Activated B cell treated with CpG ODN at 0.5 μM for 24 hours (primary cell): ENCODE measurements at regions of chr2 and their contacts with region 1.

Region 1: DNA sequence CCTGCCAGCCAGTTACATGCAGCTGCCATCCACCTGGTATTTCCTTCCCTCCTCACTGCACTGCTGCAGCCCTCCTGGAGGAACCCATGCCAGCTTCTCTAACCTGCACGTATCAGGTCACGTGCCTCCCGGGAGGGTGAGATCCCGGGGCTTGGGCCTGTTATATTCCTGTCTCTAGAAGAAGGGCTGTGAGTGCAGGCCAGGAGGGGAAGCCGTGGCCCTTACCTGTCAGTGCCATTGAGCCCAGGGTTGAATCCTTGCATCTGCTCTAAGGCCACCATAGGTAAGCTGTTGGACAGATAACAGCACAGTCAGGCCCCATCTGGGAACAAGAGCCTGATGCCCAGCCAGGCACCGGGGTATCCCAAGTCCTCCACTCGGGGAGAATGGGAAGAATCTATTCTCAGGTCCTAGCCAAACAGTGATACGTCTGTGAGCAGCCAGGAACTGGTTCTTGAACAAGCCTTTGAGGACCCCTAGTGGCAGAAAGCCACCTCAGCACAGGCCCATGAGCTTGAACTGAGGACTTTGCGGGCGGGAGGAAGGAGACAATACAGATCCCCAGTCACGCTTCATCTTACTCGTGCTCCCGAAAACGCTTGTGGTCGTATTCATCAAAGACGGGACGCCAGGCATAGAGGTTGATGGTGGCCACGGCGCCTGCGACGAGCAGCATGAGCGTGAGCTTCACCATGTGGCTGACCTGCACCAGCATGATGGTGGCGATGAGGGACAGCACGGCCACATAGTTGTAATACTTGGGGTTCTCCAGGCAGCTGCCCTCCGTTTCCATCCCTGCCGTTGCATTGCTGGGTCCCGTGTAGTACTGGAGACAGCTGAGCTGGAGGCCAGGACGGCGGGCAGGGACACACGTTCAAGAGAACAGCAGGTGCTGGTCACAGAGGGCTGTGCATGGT is 34.4 kb downstream of the CENPO start:
- DNase-seq: peak; percentile 41
- ATAC-seq: peak; percentile 86
- H3K4me3 Mint-ChIP-seq: no peak overlapping the region
- H3K27ac Mint-ChIP-seq: no peak overlapping the region
- H3K4me1 Mint-ChIP-seq: peaks cover 3% of the 10 kb centered on the region
- H3K27me3 Mint-ChIP-seq: no peaks in the 10 kb centered on the region
- CTCF ChIP-seq: peak; percentile 38

Region 2: GRCh38 chr2:24409700-24410556 is 417.7 kb before region 1 on chr2:
- CTCF ChIA-PET with region 1: interaction called, 132 read pairs
- POLR2A ChIA-PET with region 1: interaction called, 7 read pairs
- intact Hi-C with region 1: loop called (anchors 1 kb)
- DNase-seq: no peak
- ATAC-seq: peak; percentile 79
- H3K4me3 Mint-ChIP-seq: no peak overlapping the region
- H3K27ac Mint-ChIP-seq: no peak overlapping the region
- H3K4me1 Mint-ChIP-seq: no peaks in the 10 kb centered on the region
- H3K27me3 Mint-ChIP-seq: peaks cover 11% of the 10 kb centered on the region
- CTCF ChIP-seq: peak; percentile 86

Region 3: DNA sequence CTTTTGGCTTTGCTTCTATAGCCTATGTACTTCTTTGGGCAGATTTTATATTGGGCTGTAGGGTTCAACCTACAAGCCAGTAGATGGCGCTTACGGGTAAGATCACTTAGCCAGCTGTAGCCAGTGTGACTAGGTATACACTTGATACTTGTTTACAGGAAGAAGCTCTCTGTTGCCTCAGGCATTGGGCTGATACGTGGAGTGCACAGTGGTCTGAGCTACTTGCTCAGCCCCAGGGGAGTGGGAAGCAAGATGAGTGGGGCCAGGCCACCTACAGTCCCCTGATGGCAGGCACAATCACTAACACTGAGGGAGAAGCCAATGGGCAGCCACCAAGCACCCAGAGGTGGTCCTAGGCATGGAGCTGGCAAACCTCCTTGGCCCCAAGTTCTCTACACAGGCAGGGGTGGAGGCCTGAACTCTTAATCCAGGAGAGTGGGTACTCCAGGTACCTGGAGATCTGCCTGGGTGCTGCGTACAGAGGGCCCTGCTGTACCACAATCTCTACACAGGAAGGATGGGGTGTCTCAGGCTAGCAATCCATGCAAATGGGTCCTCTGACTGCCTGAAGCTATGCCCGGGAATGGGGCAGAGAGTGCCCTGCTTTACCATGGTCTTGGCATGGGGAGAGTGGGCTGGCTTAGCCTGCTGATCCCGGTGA is 214.3 kb before region 1 on chr2:
- CTCF ChIA-PET with region 1: interaction called, 3 read pairs
- POLR2A ChIA-PET with region 1: no interaction called
- intact Hi-C with region 1: loop called (anchors 1 kb)
- DNase-seq: no peak
- ATAC-seq: peak; percentile 62
- H3K4me3 Mint-ChIP-seq: no peak overlapping the region
- H3K27ac Mint-ChIP-seq: no peak overlapping the region
- H3K4me1 Mint-ChIP-seq: peaks cover 16% of the 10 kb centered on the region
- H3K27me3 Mint-ChIP-seq: no peaks in the 10 kb centered on the region
- CTCF ChIP-seq: no peak

Region 4: GRCh38 chr2:24898122-24899021 is 70.8 kb after region 1 on chr2:
- CTCF ChIA-PET with region 1: no interaction called
- POLR2A ChIA-PET with region 1: no interaction called
- intact Hi-C with region 1: no loop called
- DNase-seq: no peak
- ATAC-seq: no peak
- H3K4me3 Mint-ChIP-seq: no peak overlapping the region
- H3K27ac Mint-ChIP-seq: no peak overlapping the region
- H3K4me1 Mint-ChIP-seq: no peaks in the 10 kb centered on the region
- H3K27me3 Mint-ChIP-seq: no peaks in the 10 kb centered on the region
- CTCF ChIP-seq: no peak

Region 5: DNA sequence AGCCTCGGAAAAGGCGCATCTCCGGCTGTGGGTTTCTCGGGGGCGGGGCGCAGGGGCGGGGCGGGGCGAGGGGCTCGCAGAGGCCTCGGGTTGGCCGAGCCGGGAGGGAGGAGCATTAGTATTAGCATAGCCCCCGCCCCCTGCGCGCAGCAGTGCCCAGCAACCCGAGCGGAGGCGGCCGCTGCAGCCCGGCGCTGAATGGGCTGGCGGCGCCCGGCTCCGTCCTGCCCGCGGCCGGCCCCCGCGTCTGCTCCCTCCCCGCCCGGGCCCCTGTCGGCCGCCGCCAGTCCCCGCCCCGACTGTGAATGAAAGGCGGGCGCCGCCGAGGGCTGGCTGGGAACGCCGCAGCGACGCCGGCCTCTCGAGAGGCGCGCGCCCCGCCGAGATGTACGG is 214.3 kb after region 1 on chr2 and contains the start of gene EFR3B:
- CTCF ChIA-PET with region 1: no interaction called
- POLR2A ChIA-PET with region 1: interaction called, 14 read pairs
- intact Hi-C with region 1: no loop called
- DNase-seq: peak; percentile 84
- ATAC-seq: peak; percentile 99
- H3K4me3 Mint-ChIP-seq: peak within 1 kb of the TSS; percentile 84
- H3K27ac Mint-ChIP-seq: no peak within 1 kb of the TSS
- H3K4me1 Mint-ChIP-seq: peaks cover 27% of the 10 kb centered on the region
- H3K27me3 Mint-ChIP-seq: peaks cover 42% of the 10 kb centered on the region
- CTCF ChIP-seq: no peak
- total RNA-seq, gene EFR3B: 0.07 and 0.10 TPM in 2 replicates

Region 6: GRCh38 chr2:25201265-25201664 is 373.7 kb after region 1 on chr2:
- CTCF ChIA-PET with region 1: no interaction called
- POLR2A ChIA-PET with region 1: no interaction called
- intact Hi-C with region 1: loop called (anchors 2 kb)
- DNase-seq: no peak
- ATAC-seq: no peak
- H3K4me3 Mint-ChIP-seq: no peak overlapping the region
- H3K27ac Mint-ChIP-seq: no peak overlapping the region
- H3K4me1 Mint-ChIP-seq: peaks cover 24% of the 10 kb centered on the region
- H3K27me3 Mint-ChIP-seq: no peaks in the 10 kb centered on the region
- CTCF ChIP-seq: no peak